Activated CD4-positive, alpha-beta memory T cell treated with anti-CD3 and anti-CD28 coated beads for 36 hours (primary cell): ENCODE measurements at regions of chr4 and their contacts with region 1.

Region 1: GRCh38 chr4:121192480-121192879 is 28.4 kb upstream of the TNIP3 start:
- DNase-seq: peak; percentile 33
- H3K4me3 Mint-ChIP-seq: no peak overlapping the region
- H3K27ac Mint-ChIP-seq: peak overlapping the region; percentile 11
- H3K4me1 Mint-ChIP-seq: peaks cover 63% of the 10 kb centered on the region
- H3K27me3 Mint-ChIP-seq: no peaks in the 10 kb centered on the region

Region 2: DNA sequence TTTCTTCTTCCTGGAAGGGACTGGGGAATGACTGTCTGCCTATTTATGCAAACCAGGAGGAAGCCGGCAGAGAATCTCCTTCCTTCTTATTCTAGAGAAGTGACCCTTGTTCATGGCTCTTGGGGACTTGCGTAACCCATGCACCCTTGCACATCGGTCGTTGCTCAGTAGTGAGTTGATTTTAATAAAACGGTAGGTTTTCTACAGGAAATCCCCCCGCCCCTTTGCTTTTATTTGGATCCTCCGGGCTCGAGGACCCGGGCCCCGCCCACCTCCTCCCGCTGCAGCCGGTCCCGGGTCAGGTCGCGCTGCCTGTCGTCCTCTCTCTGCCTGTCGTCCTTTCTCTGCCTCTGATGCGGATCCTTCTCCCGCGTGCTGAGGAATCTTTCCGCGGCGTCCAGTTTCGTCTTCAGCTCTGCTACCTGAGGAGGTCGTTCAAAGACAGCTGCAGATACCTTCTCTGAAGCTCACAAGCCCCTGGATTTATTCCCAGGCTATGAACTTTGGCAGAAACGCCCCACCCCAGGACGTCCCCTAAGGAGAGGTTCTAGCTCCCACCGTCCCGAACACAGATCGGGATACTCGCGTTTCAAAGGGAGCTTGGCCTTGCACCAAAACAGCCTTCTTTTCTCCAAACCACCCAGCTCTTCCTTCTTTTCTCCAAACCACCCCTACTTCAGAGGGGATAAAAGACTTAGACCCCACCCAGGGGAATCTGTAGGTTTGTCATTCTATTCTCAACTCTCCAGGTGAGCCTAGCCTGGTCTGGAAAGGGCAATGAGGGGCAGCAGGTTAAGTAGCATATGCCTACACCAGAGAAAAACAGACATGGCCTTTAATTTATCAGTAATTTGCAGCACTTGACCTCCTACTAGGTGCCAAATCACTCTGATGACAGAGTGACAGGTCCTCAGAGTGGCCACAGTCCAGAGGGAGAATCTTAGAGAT is 35.4 kb before region 1 on chr4:
- CTCF ChIA-PET with region 1: interaction called, 11 read pairs
- POLR2A ChIA-PET with region 1: no interaction called
- intact Hi-C with region 1: loop called (anchors 1 kb)
- DNase-seq: peak; percentile 21
- H3K4me3 Mint-ChIP-seq: peak overlapping the region; percentile 68
- H3K27ac Mint-ChIP-seq: peak overlapping the region; percentile 20
- H3K4me1 Mint-ChIP-seq: peaks cover 42% of the 10 kb centered on the region
- H3K27me3 Mint-ChIP-seq: peaks cover 12% of the 10 kb centered on the region

Region 3: GRCh38 chr4:121221608-121222007 is 29.1 kb after region 1 on chr4:
- CTCF ChIA-PET with region 1: interaction called, 19 read pairs
- POLR2A ChIA-PET with region 1: no interaction called
- intact Hi-C with region 1: no loop called
- DNase-seq: no peak
- H3K4me3 Mint-ChIP-seq: peak overlapping the region; percentile 12
- H3K27ac Mint-ChIP-seq: peak overlapping the region; percentile 66
- H3K4me1 Mint-ChIP-seq: peaks cover 43% of the 10 kb centered on the region
- H3K27me3 Mint-ChIP-seq: no peaks in the 10 kb centered on the region

Region 4: DNA sequence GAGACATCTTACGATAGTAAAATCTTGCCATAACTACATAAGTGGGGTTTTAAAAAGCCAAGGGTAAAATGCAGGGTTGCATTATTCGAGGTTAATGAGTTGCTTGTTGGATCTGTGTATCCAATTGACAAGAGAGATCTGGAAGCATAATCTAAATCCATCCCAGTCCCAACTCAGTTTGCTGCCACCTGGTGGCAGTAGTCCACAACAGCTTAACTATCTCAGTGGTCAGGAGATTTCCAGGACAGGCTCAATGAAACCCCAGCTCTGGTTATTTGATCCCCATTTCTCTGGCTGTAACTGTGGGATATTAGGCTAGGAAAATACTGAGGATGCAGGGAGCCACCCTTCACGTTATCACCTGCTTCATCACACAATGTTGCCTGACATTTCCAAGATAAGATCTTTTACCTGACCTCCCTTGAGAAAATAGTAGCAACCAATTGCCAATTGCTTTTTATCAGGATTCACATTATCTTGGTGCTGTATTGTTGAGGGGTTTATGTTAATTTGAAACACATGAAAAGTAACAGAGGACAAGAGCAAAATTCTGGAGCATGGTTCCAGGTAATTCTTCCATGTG is 59.8 kb after region 1 on chr4:
- CTCF ChIA-PET with region 1: interaction called, 126 read pairs
- POLR2A ChIA-PET with region 1: no interaction called
- intact Hi-C with region 1: loop called (anchors 1 kb)
- DNase-seq: peak; percentile 68
- H3K4me3 Mint-ChIP-seq: no peak overlapping the region
- H3K27ac Mint-ChIP-seq: no peak overlapping the region
- H3K4me1 Mint-ChIP-seq: peaks cover 70% of the 10 kb centered on the region
- H3K27me3 Mint-ChIP-seq: no peaks in the 10 kb centered on the region

Region 5: GRCh38 chr4:121299367-121299766 is 106.9 kb after region 1 on chr4:
- CTCF ChIA-PET with region 1: interaction called, 28 read pairs
- POLR2A ChIA-PET with region 1: no interaction called
- intact Hi-C with region 1: no loop called
- DNase-seq: no peak
- H3K4me3 Mint-ChIP-seq: no peak overlapping the region
- H3K27ac Mint-ChIP-seq: no peak overlapping the region
- H3K4me1 Mint-ChIP-seq: no peaks in the 10 kb centered on the region
- H3K27me3 Mint-ChIP-seq: no peaks in the 10 kb centered on the region

Region 6: DNA sequence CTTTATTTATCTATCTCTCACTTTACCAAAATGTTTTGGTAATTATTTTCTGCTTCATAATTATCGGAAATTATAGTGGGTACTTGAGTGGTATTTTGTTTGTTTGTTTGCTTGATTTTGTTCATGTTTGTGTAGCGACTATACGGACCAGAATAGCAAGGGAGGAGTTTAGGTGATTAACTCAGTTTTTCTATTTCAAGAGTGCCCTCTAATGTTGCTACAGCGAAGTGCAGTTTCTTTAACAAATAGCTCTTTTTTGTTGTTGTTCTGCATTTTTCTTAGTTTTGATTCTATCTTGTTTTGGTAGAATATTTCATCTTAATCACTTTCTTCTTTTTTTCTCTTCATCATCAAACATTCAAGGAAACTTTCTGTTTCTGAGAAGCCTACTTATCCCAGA is 229.1 kb after region 1 on chr4:
- CTCF ChIA-PET with region 1: interaction called, 10 read pairs
- POLR2A ChIA-PET with region 1: interaction called, 3 read pairs
- intact Hi-C with region 1: no loop called
- DNase-seq: no peak
- H3K4me3 Mint-ChIP-seq: no peak overlapping the region
- H3K27ac Mint-ChIP-seq: no peak overlapping the region
- H3K4me1 Mint-ChIP-seq: no peaks in the 10 kb centered on the region
- H3K27me3 Mint-ChIP-seq: peaks cover 8% of the 10 kb centered on the region